ENCODE measurements at regions of chr3 and their contacts with region 1.

Region 1: DNA sequence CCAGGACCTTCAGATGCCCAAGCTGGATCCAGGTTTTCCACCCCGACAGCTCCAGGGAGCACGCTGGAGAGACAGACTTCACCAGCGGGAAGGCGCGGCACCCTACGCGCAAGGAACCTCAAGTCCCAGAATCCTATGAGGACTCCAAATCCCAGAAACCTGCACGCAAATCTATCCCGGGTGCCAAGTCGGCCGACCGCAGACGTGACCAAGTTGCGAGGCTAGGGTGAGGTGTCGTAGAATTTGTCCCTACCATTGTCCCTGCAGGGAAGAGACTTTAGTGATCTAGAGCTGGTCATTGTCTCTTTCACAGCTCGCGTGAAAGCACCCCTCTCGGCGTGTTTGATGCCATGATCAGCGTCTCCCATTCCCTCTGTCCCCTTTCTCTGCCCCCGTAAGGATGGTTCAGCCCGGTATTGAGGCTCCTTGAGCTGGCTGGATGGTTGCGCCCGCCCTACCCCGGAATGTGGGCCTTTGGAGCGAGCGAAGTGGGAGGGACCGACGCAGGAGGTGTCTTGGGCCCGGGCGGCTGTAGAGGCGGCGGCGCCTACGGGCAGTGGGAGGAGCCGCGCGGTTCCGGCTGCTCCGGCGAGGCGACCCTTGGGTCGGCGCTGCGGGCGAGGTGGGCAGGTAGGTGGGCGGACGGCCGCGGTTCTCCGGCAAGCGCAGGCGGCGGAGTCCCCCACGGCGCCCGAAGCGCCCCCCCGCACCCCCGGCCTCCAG is at the start of gene PRKCI:
- DNase-seq: peak; percentile 95 to 98 (median 97)
- ATAC-seq: peak; percentile 99 to 100 (median 100)
- H3K4me3 ChIP-seq: peak within 1 kb of the TSS; percentile 73 to 99 (median 86)
- H3K27ac ChIP-seq: peak within 1 kb of the TSS; percentile 54 to 95 (median 89)
- H3K4me1 ChIP-seq: peaks cover 0 to 18% (median 9%) of the 10 kb centered on the region in 12 donors
- H3K27me3 ChIP-seq: no peaks in the 10 kb centered on the region
- CTCF ChIP-seq: no peak
- POLR2A ChIP-seq: peak in 1 of 2 donors; percentile 91
- total RNA-seq, gene PRKCI: 8.8 to 26.9 (median 14.1) TPM

Region 2: GRCh38 chr3:169250000-169250399 is 972.1 kb before region 1 on chr3:
- intact Hi-C with region 1: no loop called
- DNase-seq: no peak
- ATAC-seq: no peak
- H3K4me3 ChIP-seq: no peak overlapping the region
- H3K27ac ChIP-seq: no peak overlapping the region
- H3K4me1 ChIP-seq: peaks cover 0 to 8% (median 0%) of the 10 kb centered on the region in 12 donors
- H3K27me3 ChIP-seq: no peaks in the 10 kb centered on the region
- CTCF ChIP-seq: no peak
- POLR2A ChIP-seq: no peak

Region 3: DNA sequence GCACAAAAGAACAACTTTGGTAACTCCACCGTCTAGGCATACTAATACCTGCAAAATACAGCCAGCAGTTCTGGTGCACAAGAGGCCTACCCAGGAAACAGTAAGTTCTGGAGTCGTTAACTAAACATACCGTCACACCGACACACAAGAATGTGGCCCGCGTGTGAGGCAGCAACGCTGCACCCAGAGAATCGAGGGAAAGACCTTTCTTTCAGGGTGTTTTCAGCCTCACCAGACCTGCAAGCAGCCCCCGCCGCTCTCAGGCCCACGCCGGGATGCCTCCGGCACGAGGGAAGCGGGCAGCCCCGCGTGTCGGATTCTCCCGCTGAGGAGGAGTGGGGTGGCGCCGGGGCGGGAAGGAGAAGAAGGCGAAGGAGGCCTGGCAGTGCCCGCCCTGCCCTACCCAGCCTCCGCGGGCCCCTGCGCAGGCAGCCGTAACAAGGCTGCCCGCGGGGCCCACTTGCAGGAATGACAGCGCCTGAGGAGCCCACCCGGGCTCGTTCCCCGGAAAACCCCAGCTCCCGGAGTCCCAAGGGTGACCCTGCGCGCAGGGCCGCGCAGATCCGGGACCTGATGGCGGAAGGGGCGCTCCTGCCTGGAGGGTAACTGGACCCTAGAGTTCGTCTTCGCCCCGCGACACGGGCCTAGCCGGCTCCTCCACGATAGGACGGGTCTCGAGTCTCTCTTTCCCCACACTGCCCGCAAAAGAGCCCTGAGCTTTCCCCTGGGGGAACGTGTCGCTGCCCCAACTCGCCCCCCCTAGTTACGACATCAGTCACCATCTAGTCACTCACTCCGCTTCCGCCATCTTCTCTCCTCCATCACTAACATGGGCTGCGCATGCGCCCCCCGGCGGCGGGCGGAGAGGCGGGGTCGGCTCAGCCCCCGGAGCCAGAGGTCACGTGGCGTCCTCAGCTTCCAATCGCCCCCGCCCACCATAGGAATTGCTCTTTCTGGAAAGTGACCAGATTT is 40.9 kb before region 1 on chr3 and contains the start of gene PHC3:
- intact Hi-C with region 1: loop called in 3 of 10 experiments (anchors 5 kb)
- DNase-seq: peak; percentile 94 to 97 (median 95)
- ATAC-seq: peak; percentile 86 to 96 (median 95)
- H3K4me3 ChIP-seq: peak within 1 kb of the TSS; percentile 62 to 97 (median 90)
- H3K27ac ChIP-seq: peak within 1 kb of the TSS; percentile 82 to 99 (median 96)
- H3K4me1 ChIP-seq: peaks cover 0 to 26% (median 20%) of the 10 kb centered on the region in 12 donors
- H3K27me3 ChIP-seq: no peaks in the 10 kb centered on the region
- CTCF ChIP-seq: peak in 4 of 12 donors; percentile 14 to 48 (median 24)
- POLR2A ChIP-seq: peak in 1 of 2 donors; percentile 63
- total RNA-seq, gene PHC3: 29.9 to 83.8 (median 50.3) TPM